Activated CD8-positive, alpha-beta T cell treated with anti-CD3 and anti-CD28 coated beads for 36 hours (primary cell): ENCODE measurements at regions of chr2 and their contacts with region 1.

Region 1: GRCh38 chr2:231900486-231900942 is 25.7 kb downstream of the NPPC start:
- DNase-seq: peak; percentile 79
- ATAC-seq: peak; percentile 66
- H3K4me3 Mint-ChIP-seq: no peak overlapping the region
- H3K27ac Mint-ChIP-seq: no peak overlapping the region
- H3K4me1 Mint-ChIP-seq: no peaks in the 10 kb centered on the region
- H3K27me3 Mint-ChIP-seq: peaks cover 2% of the 10 kb centered on the region
- CTCF ChIP-seq: peak; percentile 90

Region 2: DNA sequence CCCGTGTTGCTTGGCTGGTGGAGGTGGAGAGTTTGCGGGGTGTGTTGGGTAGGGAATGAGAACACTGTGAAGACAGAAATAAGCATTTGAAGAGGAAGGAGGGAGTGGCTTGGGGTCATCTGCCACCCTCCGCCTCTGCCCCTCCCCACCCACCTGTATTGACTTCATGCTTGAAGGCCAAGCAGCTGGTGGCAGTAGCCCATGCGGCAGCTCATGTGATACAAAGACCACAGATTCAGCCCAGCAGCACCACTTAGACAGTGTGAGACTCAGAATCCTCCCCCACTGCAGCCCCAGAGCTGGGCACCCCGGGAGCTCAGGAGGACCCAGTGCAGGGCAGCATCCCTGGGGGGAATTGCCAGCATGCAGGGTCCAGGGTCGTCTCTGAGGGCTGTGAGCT is 10.3 kb after region 1 on chr2:
- CTCF ChIA-PET with region 1: interaction called, 28 read pairs
- POLR2A ChIA-PET with region 1: interaction called, 3 read pairs
- intact Hi-C with region 1: no loop called
- DNase-seq: no peak
- ATAC-seq: no peak
- H3K4me3 Mint-ChIP-seq: no peak overlapping the region
- H3K27ac Mint-ChIP-seq: no peak overlapping the region
- H3K4me1 Mint-ChIP-seq: peaks cover 16% of the 10 kb centered on the region
- H3K27me3 Mint-ChIP-seq: no peaks in the 10 kb centered on the region
- CTCF ChIP-seq: no peak

Region 3: GRCh38 chr2:231917280-231918066 is 17.0 kb after region 1 on chr2:
- CTCF ChIA-PET with region 1: interaction called, 59 read pairs
- POLR2A ChIA-PET with region 1: interaction called, 3 read pairs
- intact Hi-C with region 1: no loop called
- DNase-seq: no peak
- ATAC-seq: no peak
- H3K4me3 Mint-ChIP-seq: no peak overlapping the region
- H3K27ac Mint-ChIP-seq: no peak overlapping the region
- H3K4me1 Mint-ChIP-seq: no peaks in the 10 kb centered on the region
- H3K27me3 Mint-ChIP-seq: no peaks in the 10 kb centered on the region
- CTCF ChIP-seq: no peak

Region 4: GRCh38 chr2:231925303-231926179 is 25.0 kb after region 1 on chr2:
- CTCF ChIA-PET with region 1: interaction called, 59 read pairs
- POLR2A ChIA-PET with region 1: no interaction called
- intact Hi-C with region 1: no loop called
- DNase-seq: peak; percentile 82
- ATAC-seq: peak; percentile 40
- H3K4me3 Mint-ChIP-seq: peak overlapping the region; percentile 70
- H3K27ac Mint-ChIP-seq: no peak overlapping the region
- H3K4me1 Mint-ChIP-seq: peaks cover 8% of the 10 kb centered on the region
- H3K27me3 Mint-ChIP-seq: peaks cover 42% of the 10 kb centered on the region
- CTCF ChIP-seq: peak; percentile 91

Region 5: DNA sequence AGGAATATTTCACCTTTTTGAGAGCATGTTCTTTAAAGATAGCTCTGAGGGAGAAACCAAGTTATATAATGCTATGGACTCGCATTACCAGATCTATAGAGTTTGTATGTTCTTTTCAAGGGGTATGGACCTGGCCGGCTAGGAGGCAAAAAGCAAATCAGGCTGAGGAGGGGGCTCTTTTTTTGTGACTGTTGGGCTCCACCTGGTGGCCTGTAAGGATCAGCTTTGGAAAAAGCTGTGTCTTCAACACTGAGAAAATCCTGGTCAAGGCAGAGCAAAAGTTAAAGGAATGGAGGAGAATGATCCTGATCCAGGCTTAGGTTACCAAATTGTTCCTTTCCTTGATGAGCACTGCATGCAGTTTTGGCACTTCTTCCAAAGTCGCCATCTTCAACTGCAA is 241.5 kb after region 1 on chr2:
- CTCF ChIA-PET with region 1: interaction called, 20 read pairs
- POLR2A ChIA-PET with region 1: no interaction called
- intact Hi-C with region 1: no loop called
- DNase-seq: peak; percentile 69
- ATAC-seq: peak; percentile 57
- H3K4me3 Mint-ChIP-seq: no peak overlapping the region
- H3K27ac Mint-ChIP-seq: no peak overlapping the region
- H3K4me1 Mint-ChIP-seq: peaks cover 40% of the 10 kb centered on the region
- H3K27me3 Mint-ChIP-seq: no peaks in the 10 kb centered on the region
- CTCF ChIP-seq: peak; percentile 64

Region 6: DNA sequence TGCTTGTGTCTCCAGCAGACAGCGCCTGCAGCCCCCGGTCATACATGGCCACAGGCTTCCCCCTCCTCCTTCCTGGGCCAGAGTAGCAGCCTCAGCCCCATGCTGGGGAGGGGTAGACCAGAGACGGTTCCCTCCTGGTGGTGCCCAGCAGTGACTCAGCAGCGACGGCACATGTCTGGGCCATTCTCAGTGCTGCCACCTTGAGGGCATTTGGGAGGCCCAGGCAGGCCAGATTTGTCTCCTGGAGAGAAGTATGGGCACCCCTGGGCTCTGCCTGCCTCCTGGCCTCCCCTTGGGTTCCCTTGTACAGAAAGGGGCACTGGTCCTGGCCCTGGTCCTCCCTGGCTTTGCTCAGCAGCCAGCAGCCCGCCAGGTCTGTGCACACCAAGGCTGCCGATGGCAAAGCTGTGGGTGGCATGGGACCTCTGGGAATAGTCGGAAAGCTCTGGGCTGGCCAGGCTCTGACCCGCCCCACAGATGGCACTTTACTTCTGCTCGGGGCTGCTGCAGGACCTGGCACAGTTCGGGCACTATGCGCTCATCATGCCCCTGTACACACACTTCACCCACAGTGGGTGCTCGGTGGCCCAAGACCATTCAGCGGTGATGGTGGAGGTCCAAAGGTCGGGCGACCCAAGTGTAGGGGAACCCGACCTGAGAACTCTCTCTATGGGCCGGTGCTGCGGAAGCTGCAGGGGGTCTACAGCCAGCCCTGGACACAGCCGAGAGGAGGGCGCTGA is 544.1 kb after region 1 on chr2:
- CTCF ChIA-PET with region 1: interaction called, 5 read pairs
- POLR2A ChIA-PET with region 1: no interaction called
- intact Hi-C with region 1: loop called (anchors 5 kb)
- DNase-seq: peak; percentile 85
- ATAC-seq: peak; percentile 74
- H3K4me3 Mint-ChIP-seq: no peak overlapping the region
- H3K27ac Mint-ChIP-seq: no peak overlapping the region
- H3K4me1 Mint-ChIP-seq: peaks cover 17% of the 10 kb centered on the region
- H3K27me3 Mint-ChIP-seq: peaks cover 1% of the 10 kb centered on the region
- CTCF ChIP-seq: peak; percentile 61